Panc1 (cell line): ENCODE measurements at regions of chr20 and their contacts with region 1.

Region 1: GRCh38 chr20:5722927-5723326 is 27.3 kb upstream of the SHLD1 start:
- DNase-seq: no peak
- ATAC-seq: no peak
- H3K4me3 ChIP-seq: no peak overlapping the region
- H3K27ac ChIP-seq: no peak overlapping the region
- H3K4me1 ChIP-seq: no peaks in the 10 kb centered on the region
- H3K27me3 ChIP-seq: no peaks in the 10 kb centered on the region
- CTCF ChIP-seq: no peak

Region 2: GRCh38 chr20:5612476-5613301 is 110.2 kb before region 1 on chr20:
- CTCF ChIA-PET with region 1: no interaction called
- POLR2A ChIA-PET with region 1: interaction called, 10 read pairs
- in situ Hi-C with region 1: no loop called
- intact Hi-C with region 1: no loop called
- DNase-seq: no peak
- ATAC-seq: no peak
- H3K4me3 ChIP-seq: no peak overlapping the region
- H3K27ac ChIP-seq: no peak overlapping the region
- H3K4me1 ChIP-seq: peaks cover 17% of the 10 kb centered on the region
- H3K27me3 ChIP-seq: no peaks in the 10 kb centered on the region
- CTCF ChIP-seq: no peak